ENCODE measurements at regions of chr13 and their contacts with region 1.

Region 1: GRCh38 chr13:37009692-37010091 is 9.1 kb downstream of the EXOSC8 start:
- DNase-seq: no peak
- H3K4me3 ChIP-seq: no peak overlapping the region
- H3K27ac ChIP-seq: no peak overlapping the region
- H3K4me1 ChIP-seq: no peaks in the 10 kb centered on the region
- H3K27me3 ChIP-seq: no peaks in the 10 kb centered on the region
- CTCF ChIP-seq: no peak
- EP300 ChIP-seq: no peak
- POLR2A ChIP-seq: no peak

Region 2: DNA sequence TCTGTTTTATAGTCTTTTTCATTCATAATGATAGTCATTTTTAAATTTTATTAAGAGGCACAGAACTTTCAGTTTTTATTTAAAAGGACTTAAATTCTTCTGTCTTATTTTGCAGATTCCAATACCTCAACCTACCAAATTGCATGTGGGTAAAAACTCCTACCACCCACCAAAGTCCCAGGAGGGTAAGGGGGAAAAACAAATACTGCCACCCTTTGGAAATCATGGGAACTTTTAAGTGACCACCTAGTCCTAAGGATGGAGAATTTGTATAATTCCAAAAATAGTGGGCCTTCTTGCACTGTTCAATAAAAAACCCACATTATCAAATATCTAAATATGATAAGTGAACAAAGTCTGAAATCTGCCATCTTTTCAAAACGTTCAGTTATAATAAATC is 40.1 kb after region 1 on chr13:
- intact Hi-C with region 1: loop called (anchors 5 kb)
- DNase-seq: no peak
- H3K4me3 ChIP-seq: no peak overlapping the region
- H3K27ac ChIP-seq: no peak overlapping the region
- H3K4me1 ChIP-seq: peaks cover 0 to 4% (median 0%) of the 10 kb centered on the region in 4 donors
- H3K27me3 ChIP-seq: no peaks in the 10 kb centered on the region
- CTCF ChIP-seq: no peak
- EP300 ChIP-seq: no peak
- POLR2A ChIP-seq: no peak

Measured in esophagus muscularis mucosa (tissue), 4 donors.